ENCODE measurements at regions of chr12 and their contacts with region 1.

Region 1: GRCh38 chr12:27652174-27652763 is 44.0 kb upstream of the REP15 start:
- DNase-seq: peak; percentile 48
- CTCF ChIP-seq: peak; percentile 83

Region 2: GRCh38 chr12:27667540-27667939 is 15.3 kb after region 1 on chr12:
- CTCF ChIA-PET with region 1: interaction called, 11 read pairs
- POLR2A ChIA-PET with region 1: no interaction called
- DNase-seq: no peak
- CTCF ChIP-seq: no peak